Gastrocnemius medialis (tissue), 4 donors: ENCODE measurements at regions of chr3 and their contacts with region 1.

Region 1: DNA sequence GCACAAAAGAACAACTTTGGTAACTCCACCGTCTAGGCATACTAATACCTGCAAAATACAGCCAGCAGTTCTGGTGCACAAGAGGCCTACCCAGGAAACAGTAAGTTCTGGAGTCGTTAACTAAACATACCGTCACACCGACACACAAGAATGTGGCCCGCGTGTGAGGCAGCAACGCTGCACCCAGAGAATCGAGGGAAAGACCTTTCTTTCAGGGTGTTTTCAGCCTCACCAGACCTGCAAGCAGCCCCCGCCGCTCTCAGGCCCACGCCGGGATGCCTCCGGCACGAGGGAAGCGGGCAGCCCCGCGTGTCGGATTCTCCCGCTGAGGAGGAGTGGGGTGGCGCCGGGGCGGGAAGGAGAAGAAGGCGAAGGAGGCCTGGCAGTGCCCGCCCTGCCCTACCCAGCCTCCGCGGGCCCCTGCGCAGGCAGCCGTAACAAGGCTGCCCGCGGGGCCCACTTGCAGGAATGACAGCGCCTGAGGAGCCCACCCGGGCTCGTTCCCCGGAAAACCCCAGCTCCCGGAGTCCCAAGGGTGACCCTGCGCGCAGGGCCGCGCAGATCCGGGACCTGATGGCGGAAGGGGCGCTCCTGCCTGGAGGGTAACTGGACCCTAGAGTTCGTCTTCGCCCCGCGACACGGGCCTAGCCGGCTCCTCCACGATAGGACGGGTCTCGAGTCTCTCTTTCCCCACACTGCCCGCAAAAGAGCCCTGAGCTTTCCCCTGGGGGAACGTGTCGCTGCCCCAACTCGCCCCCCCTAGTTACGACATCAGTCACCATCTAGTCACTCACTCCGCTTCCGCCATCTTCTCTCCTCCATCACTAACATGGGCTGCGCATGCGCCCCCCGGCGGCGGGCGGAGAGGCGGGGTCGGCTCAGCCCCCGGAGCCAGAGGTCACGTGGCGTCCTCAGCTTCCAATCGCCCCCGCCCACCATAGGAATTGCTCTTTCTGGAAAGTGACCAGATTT is at the start of gene PHC3:
- DNase-seq: peak; percentile 75 to 89
- ATAC-seq: peak; percentile 95 to 96
- H3K4me3 ChIP-seq: peak within 1 kb of the TSS; percentile 78 to 98 (median 88)
- H3K27ac ChIP-seq: peak within 1 kb of the TSS; percentile 89 to 99 (median 94)
- H3K4me1 ChIP-seq: peaks cover 16 to 17% of the 10 kb centered on the region in 2 donors
- H3K27me3 ChIP-seq: no peaks in the 10 kb centered on the region
- CTCF ChIP-seq: peak in 3 of 5 experiments; percentile 19 to 38 (median 22)
- POLR2A ChIP-seq: peak; percentile 58 to 63
- total RNA-seq, gene PHC3: 25.4 to 37.0 (median 32.4) TPM

Region 2: GRCh38 chr3:169772897-169773828 is 408.0 kb before region 1 on chr3 and contains the start of gene MYNN:
- in situ Hi-C with region 1: no loop called
- intact Hi-C with region 1: loop called (anchors 1 kb)
- DNase-seq: peak; percentile 85 to 88
- ATAC-seq: peak; percentile 86 to 88
- H3K4me3 ChIP-seq: peak within 1 kb of the TSS; percentile 76 to 99 (median 92)
- H3K27ac ChIP-seq: peak within 1 kb of the TSS; percentile 95 to 100 (median 97)
- H3K4me1 ChIP-seq: peaks cover 26 to 27% of the 10 kb centered on the region in 2 donors
- H3K27me3 ChIP-seq: no peaks in the 10 kb centered on the region
- CTCF ChIP-seq: no peak
- POLR2A ChIP-seq: peak; percentile 99
- total RNA-seq, gene MYNN: 12.0 to 20.2 (median 14.7) TPM

Region 3: DNA sequence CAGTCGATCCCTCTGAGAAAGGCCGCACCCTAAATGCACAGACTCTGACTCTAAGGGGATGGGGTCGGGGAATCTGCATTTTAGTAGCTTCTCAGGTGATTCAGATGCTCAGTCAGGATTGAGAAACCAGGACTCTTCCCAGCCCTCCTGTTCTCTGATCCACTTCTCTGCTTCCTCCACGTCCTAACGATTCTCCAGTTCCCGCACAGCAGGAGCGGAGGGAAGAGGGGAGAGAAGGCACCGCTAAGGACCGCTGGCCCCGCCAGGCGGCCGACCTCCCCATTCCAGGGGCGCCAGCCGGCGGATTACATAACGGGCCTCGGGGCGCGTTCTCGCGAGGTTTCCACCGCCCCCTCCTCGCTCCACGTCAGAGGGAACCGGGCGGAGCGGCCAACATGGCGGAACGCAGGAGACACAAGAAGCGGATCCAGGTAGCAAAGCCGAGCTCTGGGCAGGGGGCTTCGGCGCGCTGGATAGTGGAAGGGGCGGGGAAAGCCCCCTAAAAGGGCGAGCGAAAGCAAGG is 214.7 kb before region 1 on chr3 and contains the start of gene SEC62:
- in situ Hi-C with region 1: no loop called
- intact Hi-C with region 1: loop called (anchors 2 kb)
- DNase-seq: peak; percentile 82 to 86
- ATAC-seq: peak; percentile 95 to 96
- H3K4me3 ChIP-seq: peak within 1 kb of the TSS; percentile 72 to 97 (median 88)
- H3K27ac ChIP-seq: peak within 1 kb of the TSS; percentile 94 to 97 (median 96)
- H3K4me1 ChIP-seq: peaks cover 28 to 40% of the 10 kb centered on the region in 2 donors
- H3K27me3 ChIP-seq: no peaks in the 10 kb centered on the region
- CTCF ChIP-seq: peak in 4 of 5 experiments; percentile 20 to 29 (median 26)
- POLR2A ChIP-seq: peak; percentile 63 to 68
- total RNA-seq, gene SEC62: 22.6 to 42.8 (median 30.4) TPM

Region 4: GRCh38 chr3:170221924-170222646 is 40.9 kb after region 1 on chr3 and contains the start of gene PRKCI:
- in situ Hi-C with region 1: no loop called
- intact Hi-C with region 1: loop called (anchors 1 kb)
- DNase-seq: peak; percentile 93 to 95
- ATAC-seq: peak; percentile 96 to 97
- H3K4me3 ChIP-seq: peak within 1 kb of the TSS; percentile 78 to 98 (median 86)
- H3K27ac ChIP-seq: peak within 1 kb of the TSS; percentile 75 to 86 (median 84)
- H3K4me1 ChIP-seq: peaks cover 6 to 10% of the 10 kb centered on the region in 2 donors
- H3K27me3 ChIP-seq: no peaks in the 10 kb centered on the region
- CTCF ChIP-seq: no peak
- POLR2A ChIP-seq: peak; percentile 81 to 83
- total RNA-seq, gene PRKCI: 10.5 to 20.9 (median 14.0) TPM

Region 5: GRCh38 chr3:170357176-170357919 is 176.2 kb after region 1 on chr3 and contains the start of gene SKIL:
- in situ Hi-C with region 1: no loop called
- intact Hi-C with region 1: loop called (anchors 2 kb)
- DNase-seq: peak; percentile 95 to 97
- ATAC-seq: peak; percentile 77 to 83
- H3K4me3 ChIP-seq: peak within 1 kb of the TSS; percentile 86 to 93 (median 92)
- H3K27ac ChIP-seq: peak within 1 kb of the TSS; percentile 98 to 99 (median 99)
- H3K4me1 ChIP-seq: peaks cover 30 to 47% of the 10 kb centered on the region in 2 donors
- H3K27me3 ChIP-seq: no peaks in the 10 kb centered on the region
- CTCF ChIP-seq: peak in 2 of 5 experiments; percentile 3 to 11
- POLR2A ChIP-seq: peak; percentile 92 to 93
- total RNA-seq, gene SKIL: 26.7 to 45.1 (median 29.4) TPM

Region 6: DNA sequence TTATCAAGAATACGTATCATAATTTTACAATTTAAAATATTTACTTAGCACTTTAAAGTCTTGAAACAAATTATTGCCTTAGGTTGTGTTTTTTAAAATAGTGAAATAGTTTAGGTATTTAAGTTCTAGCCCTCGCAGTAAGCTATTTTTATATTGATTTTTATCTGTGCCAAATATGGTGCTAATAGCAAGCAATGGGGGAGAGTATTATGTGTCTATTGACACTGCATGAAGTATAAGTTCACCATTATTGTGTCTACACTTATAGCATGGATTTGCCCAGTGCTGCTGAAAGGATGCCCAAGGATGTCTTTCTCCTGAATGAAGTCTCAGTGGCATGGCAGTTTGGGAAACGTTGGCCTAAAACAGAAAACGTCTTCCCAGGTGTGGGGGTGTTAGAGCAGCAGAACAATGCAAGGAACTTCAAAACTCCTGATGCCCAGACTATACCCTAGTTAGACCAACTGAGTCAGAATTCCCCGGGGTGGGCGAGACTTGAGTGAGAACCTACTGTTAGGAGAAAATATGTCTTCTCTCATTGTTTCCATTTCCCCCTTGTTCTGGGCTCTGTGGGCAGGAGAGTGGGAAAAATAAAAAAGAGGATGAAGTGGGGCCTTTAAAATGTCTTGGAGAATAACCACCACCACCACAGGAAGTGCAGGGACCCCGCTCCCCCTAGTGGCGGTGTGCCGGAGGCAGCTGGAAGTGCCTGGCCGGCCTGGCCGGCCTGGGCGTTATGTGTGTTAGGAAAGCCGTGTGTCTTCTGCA is 508.9 kb after region 1 on chr3:
- in situ Hi-C with region 1: no loop called
- intact Hi-C with region 1: no loop called
- DNase-seq: peak in 1 of 2 donors; percentile 38
- ATAC-seq: peak in 1 of 2 donors; percentile 65
- H3K4me3 ChIP-seq: no peak overlapping the region
- H3K27ac ChIP-seq: no peak overlapping the region
- H3K4me1 ChIP-seq: peaks cover 0 to 7% of the 10 kb centered on the region in 2 donors
- H3K27me3 ChIP-seq: no peaks in the 10 kb centered on the region
- CTCF ChIP-seq: peak in 4 of 5 experiments; percentile 23 to 71 (median 53)
- POLR2A ChIP-seq: no peak

Region 7: GRCh38 chr3:170869645-170870593 is 688.7 kb after region 1 on chr3 and contains the start of gene RPL22L1:
- in situ Hi-C with region 1: no loop called
- intact Hi-C with region 1: loop called (anchors 10 kb)
- DNase-seq: peak; percentile 86 to 88
- ATAC-seq: peak; percentile 96 to 98
- H3K4me3 ChIP-seq: peak within 1 kb of the TSS; percentile 70 to 86 (median 81)
- H3K27ac ChIP-seq: peak within 1 kb of the TSS; percentile 71 to 86 (median 82)
- H3K4me1 ChIP-seq: peaks cover 11 to 15% of the 10 kb centered on the region in 2 donors
- H3K27me3 ChIP-seq: no peaks in the 10 kb centered on the region
- CTCF ChIP-seq: no peak
- POLR2A ChIP-seq: peak; percentile 83 to 84
- total RNA-seq, gene RPL22L1: 28.3 to 83.5 (median 29.5) TPM